IMR-90 (cell line): ENCODE measurements at regions of chr1 and their contacts with region 1.

Region 1: GRCh38 chr1:59750328-59751003 is 64.3 kb upstream of the HOOK1 start:
- DNase-seq: peak; percentile 94
- ATAC-seq: peak; percentile 78
- H3K4me3 ChIP-seq: no peak overlapping the region
- H3K27ac ChIP-seq: peak overlapping the region; percentile 62; the same call in 1 of the 2 replicates
- H3K4me1 ChIP-seq: peaks cover 4% of the 10 kb centered on the region
- H3K27me3 ChIP-seq: no peaks in the 10 kb centered on the region
- CTCF ChIP-seq: no peak
- POLR2A ChIP-seq: no peak
- RAD21 ChIP-seq: no peak

Region 2: GRCh38 chr1:58762806-58763205 is 987.7 kb before region 1 on chr1:
- CTCF ChIA-PET with region 1: no interaction called
- POLR2A ChIA-PET with region 1: interaction called, 15 read pairs
- dilution Hi-C with region 1: no loop called
- in situ Hi-C with region 1: no loop called
- intact Hi-C with region 1: no loop called
- DNase-seq: peak; percentile 63
- ATAC-seq: peak; percentile 59
- H3K4me3 ChIP-seq: no peak overlapping the region
- H3K27ac ChIP-seq: peak overlapping the region; percentile 88
- H3K4me1 ChIP-seq: peaks cover 25% of the 10 kb centered on the region
- H3K27me3 ChIP-seq: no peaks in the 10 kb centered on the region
- CTCF ChIP-seq: no peak
- POLR2A ChIP-seq: no peak
- RAD21 ChIP-seq: no peak

Region 3: DNA sequence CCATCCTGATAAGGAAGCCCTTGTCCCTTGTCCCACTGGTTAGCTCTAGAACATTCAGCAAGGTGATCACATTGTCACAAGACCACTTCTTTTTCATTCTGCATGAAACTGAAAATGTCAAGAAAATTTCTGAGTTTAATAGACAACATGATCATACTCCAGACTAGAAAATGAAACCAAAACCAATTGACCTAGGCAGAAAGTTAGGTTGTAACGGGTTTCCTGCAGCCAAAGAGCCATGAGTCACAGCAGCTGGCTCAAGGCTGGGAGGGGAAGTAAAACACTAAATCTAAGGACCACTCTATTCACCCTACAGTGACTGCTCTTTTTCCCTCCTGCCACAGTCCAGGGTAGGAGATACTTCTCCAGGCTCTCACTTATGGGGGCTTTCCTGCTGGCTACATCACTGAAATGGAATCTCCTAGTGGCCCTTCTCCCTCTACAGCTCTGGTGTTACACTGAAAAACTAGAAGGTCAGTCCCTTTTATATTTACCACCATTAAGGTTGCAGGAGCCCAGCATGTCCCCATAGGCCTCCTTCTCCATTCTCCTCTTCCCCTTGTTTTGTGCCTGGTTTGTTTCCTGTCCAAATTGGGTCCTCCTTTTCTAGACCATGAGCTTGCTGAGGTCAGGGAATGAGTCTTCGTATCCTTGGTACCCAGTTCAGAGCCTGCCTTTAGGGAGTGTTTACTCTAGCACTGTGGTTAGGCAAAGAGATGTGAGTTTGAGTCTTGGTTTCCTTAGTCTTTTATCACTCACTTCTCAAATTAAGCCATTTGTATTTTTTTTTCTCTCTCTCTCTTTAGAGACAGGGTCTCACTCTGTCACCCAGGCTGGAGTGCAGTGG is 730.1 kb before region 1 on chr1:
- CTCF ChIA-PET with region 1: no interaction called
- POLR2A ChIA-PET with region 1: no interaction called
- dilution Hi-C with region 1: no loop called
- in situ Hi-C with region 1: no loop called
- intact Hi-C with region 1: loop called (anchors 5 kb)
- DNase-seq: peak; percentile 86
- ATAC-seq: peak; percentile 69
- H3K4me3 ChIP-seq: peak overlapping the region; percentile 31; the same call in 1 of the 2 replicates
- H3K27ac ChIP-seq: peak overlapping the region; percentile 82
- H3K4me1 ChIP-seq: peaks cover 23% of the 10 kb centered on the region
- H3K27me3 ChIP-seq: no peaks in the 10 kb centered on the region
- CTCF ChIP-seq: no peak
- POLR2A ChIP-seq: no peak
- RAD21 ChIP-seq: no peak

Region 4: DNA sequence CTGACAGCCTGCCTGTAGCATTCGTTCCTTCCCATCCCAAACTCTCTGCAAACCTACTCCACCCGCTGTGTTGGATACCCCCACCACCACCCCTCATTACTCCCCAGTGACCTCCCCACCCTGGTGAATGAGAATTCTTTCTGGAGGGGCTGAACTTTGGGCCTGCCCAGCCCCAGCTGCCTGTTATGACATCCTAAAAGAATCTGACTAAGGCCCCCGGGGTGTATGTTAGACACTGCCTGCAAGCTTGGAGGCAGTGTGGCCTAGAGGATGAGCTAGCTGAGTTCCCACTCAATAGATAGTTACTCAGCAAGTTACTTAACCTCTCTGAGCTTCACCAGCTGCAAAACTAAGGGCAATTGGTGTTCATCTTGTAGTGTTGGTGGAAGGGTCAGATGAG is 563.8 kb before region 1 on chr1:
- CTCF ChIA-PET with region 1: no interaction called
- POLR2A ChIA-PET with region 1: no interaction called
- dilution Hi-C with region 1: no loop called
- in situ Hi-C with region 1: no loop called
- intact Hi-C with region 1: loop called (anchors 2 kb)
- DNase-seq: peak; percentile 79
- ATAC-seq: peak; percentile 84
- H3K4me3 ChIP-seq: no peak overlapping the region
- H3K27ac ChIP-seq: no peak overlapping the region
- H3K4me1 ChIP-seq: peaks cover 5% of the 10 kb centered on the region
- H3K27me3 ChIP-seq: no peaks in the 10 kb centered on the region
- CTCF ChIP-seq: no peak; the same call in 1 of the 2 replicates
- POLR2A ChIP-seq: no peak
- RAD21 ChIP-seq: peak; percentile 48

Region 5: DNA sequence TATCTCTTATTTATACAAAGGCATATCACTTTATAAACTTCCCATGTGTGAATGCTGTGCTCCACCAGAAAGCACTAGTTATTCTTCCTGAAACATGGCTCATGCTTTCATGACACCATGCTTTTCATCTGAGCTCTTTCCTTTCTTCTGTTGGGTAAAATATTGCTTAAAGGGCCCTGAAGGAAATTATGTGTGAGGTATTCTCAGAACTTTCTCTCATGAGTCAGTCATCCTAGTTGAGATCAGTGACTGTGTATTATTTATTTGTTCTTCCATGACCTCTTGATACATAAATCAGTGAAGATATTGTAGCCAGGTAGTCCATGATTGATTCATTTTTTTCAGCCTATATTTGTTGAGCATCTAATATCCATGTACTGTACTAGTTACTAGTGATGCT is 121.3 kb after region 1 on chr1:
- CTCF ChIA-PET with region 1: no interaction called
- POLR2A ChIA-PET with region 1: no interaction called
- dilution Hi-C with region 1: no loop called
- in situ Hi-C with region 1: no loop called
- intact Hi-C with region 1: no loop called
- DNase-seq: no peak
- ATAC-seq: no peak
- H3K4me3 ChIP-seq: no peak overlapping the region
- H3K27ac ChIP-seq: no peak overlapping the region
- H3K4me1 ChIP-seq: no peaks in the 10 kb centered on the region
- H3K27me3 ChIP-seq: no peaks in the 10 kb centered on the region
- CTCF ChIP-seq: no peak
- POLR2A ChIP-seq: no peak
- RAD21 ChIP-seq: no peak

Region 6: GRCh38 chr1:60034999-60035398 is 284.5 kb after region 1 on chr1:
- CTCF ChIA-PET with region 1: no interaction called
- POLR2A ChIA-PET with region 1: no interaction called
- dilution Hi-C with region 1: no loop called
- in situ Hi-C with region 1: no loop called
- intact Hi-C with region 1: no loop called
- DNase-seq: no peak
- ATAC-seq: no peak
- H3K4me3 ChIP-seq: no peak overlapping the region
- H3K27ac ChIP-seq: no peak overlapping the region
- H3K4me1 ChIP-seq: no peaks in the 10 kb centered on the region
- H3K27me3 ChIP-seq: no peaks in the 10 kb centered on the region
- CTCF ChIP-seq: no peak
- POLR2A ChIP-seq: no peak
- RAD21 ChIP-seq: no peak

Region 7: DNA sequence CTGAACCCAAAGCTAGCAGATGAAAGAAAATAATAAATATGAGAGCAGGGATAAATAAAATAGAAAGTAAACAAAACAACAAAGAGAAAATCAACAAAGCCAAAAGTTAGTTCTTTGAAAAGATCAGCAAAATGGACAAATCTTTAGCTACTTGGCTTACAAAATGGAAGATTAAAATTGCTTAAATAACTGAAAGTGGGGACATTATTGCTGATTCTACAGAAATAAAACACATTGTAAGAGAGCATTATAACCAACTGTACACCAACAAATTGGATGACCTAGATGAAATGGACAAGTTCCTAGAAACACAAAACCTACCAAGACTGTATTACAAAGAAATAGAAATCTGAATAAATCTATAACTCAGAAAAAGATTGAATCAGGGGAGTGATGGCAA is 561.4 kb after region 1 on chr1:
- CTCF ChIA-PET with region 1: no interaction called
- POLR2A ChIA-PET with region 1: no interaction called
- dilution Hi-C with region 1: no loop called
- in situ Hi-C with region 1: no loop called
- intact Hi-C with region 1: no loop called
- DNase-seq: no peak
- ATAC-seq: no peak
- H3K4me3 ChIP-seq: no peak overlapping the region
- H3K27ac ChIP-seq: no peak overlapping the region
- H3K4me1 ChIP-seq: no peaks in the 10 kb centered on the region
- H3K27me3 ChIP-seq: no peaks in the 10 kb centered on the region
- CTCF ChIP-seq: no peak
- POLR2A ChIP-seq: no peak
- RAD21 ChIP-seq: no peak